Activated CD4-positive, alpha-beta T cell treated with anti-CD3 and anti-CD28 coated beads, Interleukin-2, amount 10 ng/mL, durations not matched to agents 7 days and 5 days (primary cell): ENCODE measurements at regions of chr2 and their contacts with region 1.

Region 1: DNA sequence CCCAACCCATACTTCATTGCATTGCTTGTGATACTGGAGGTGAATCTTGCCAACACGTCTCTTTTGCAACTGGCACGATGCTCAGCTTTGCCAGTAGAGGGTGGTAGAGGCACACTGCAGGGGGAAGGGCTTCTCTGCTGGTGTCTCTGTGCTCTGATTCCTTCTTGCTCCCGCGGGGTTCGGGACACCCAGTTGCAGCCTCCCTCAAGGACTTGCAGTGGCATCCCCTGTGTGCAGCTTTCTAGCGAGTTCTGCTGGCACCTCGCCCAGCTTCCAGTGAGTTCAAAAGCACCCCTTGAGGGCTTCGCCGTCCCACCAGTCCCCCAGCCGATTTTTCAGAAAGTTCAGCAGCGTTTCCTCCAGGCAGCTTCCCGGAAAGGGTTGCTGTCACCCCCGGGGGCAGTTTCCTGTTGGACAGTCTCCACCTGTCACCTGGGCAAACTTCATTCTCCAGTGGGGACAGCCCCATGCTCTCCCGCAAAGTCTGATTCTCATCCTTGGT is 35.3 kb upstream of the EN1 start:
- DNase-seq: peak; percentile 80
- H3K4me3 Mint-ChIP-seq: peak overlapping the region; percentile 72
- H3K27ac Mint-ChIP-seq: peak overlapping the region; percentile 73
- H3K4me1 Mint-ChIP-seq: peaks cover 16% of the 10 kb centered on the region
- H3K27me3 Mint-ChIP-seq: peaks cover 8% of the 10 kb centered on the region

Region 2: DNA sequence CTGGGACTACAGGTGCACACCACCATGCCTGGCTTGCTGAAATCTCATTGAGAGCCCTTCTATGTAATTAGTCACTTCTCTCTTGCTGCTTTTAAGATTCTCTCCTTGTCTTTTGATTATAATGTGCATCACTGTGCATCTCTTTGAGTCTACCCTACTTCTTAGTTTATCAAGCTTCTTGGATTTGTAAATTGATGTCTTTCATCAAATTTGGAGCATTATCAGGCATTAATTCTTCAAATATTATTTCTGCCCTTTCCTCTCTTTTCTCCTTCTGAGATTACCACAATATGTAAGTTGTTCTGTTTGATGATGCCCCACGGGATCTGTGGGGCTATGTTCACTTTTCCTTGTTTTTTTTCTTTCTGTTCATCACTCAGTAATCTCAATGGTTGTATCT is 50.2 kb after region 1 on chr2:
- CTCF ChIA-PET with region 1: no interaction called
- POLR2A ChIA-PET with region 1: no interaction called
- DNase-seq: no peak
- H3K4me3 Mint-ChIP-seq: no peak overlapping the region
- H3K27ac Mint-ChIP-seq: no peak overlapping the region
- H3K4me1 Mint-ChIP-seq: no peaks in the 10 kb centered on the region
- H3K27me3 Mint-ChIP-seq: peaks cover 5% of the 10 kb centered on the region

Region 3: DNA sequence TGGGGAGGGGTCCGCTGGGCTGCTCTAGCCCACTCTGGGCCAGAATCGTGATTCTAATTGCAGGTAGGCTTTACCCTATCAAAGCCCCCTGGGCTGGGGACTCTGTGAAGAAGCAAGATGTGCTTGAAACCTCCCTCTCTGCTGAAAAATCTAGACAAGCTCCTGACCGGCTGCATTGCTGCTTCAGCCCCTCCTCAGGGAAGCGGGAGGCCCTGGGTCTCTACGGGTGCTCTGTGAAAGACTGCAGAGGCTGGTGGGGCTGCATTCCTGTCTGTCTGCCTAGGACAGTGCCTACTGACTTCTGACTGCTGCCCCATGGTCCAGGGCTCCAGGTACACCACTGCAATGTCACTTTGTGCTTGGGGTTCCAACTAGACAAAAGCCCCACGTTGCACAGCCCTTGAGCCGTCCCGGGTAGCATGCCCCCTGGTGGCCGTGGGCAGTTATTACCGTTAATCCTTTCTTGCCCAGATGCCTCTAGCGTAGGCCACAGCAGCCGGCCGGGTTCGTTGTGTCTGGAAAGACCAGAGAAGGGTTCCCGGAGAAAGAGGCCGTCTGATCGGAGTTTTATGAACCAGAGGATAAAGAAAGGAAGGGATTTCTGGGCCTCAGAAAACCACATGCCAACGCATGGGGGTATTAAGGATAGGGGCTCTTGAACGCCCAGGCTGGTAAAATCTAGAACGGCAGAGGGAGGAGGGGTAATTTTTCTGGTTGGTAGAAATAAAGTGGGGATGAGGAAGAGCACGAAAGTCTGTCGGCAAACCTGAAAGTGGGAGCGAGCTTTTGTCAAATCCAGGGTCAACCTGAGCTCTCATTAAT is 291.7 kb after region 1 on chr2:
- CTCF ChIA-PET with region 1: interaction called, 11 read pairs
- POLR2A ChIA-PET with region 1: no interaction called
- DNase-seq: peak; percentile 57
- H3K4me3 Mint-ChIP-seq: no peak overlapping the region
- H3K27ac Mint-ChIP-seq: no peak overlapping the region
- H3K4me1 Mint-ChIP-seq: no peaks in the 10 kb centered on the region
- H3K27me3 Mint-ChIP-seq: no peaks in the 10 kb centered on the region